ENCODE measurements at regions of chr2 and their contacts with region 1.

Region 1: GRCh38 chr2:64865073-64865830 is 123.9 kb upstream of the SLC1A4 start:
- DNase-seq: peak in 1 of 2 experiments; percentile 78
- H3K4me3 ChIP-seq: peak overlapping the region; percentile 39 to 80 (median 54)
- H3K27ac ChIP-seq: no peak overlapping the region
- H3K4me1 ChIP-seq: peaks cover 0 to 7% (median 6%) of the 10 kb centered on the region in 4 experiments
- H3K27me3 ChIP-seq: peaks cover 3 to 37% (median 32%) of the 10 kb centered on the region in 4 experiments
- CTCF ChIP-seq: peak; percentile 67 to 76 (median 68)
- EP300 ChIP-seq: no peak
- POLR2A ChIP-seq: no peak
- RAD21 ChIP-seq: peak; percentile 45 to 81; a peak in 3 of 4 replicates

Region 2: GRCh38 chr2:64644177-64645004 is 220.9 kb before region 1 on chr2:
- CTCF ChIA-PET with region 1: interaction called, 22 read pairs
- POLR2A ChIA-PET with region 1: interaction called, 9 read pairs
- DNase-seq: peak; percentile 71 to 75
- H3K4me3 ChIP-seq: peak overlapping the region; percentile 48 to 64 (median 58)
- H3K27ac ChIP-seq: peak overlapping the region; percentile 49
- H3K4me1 ChIP-seq: peaks cover 6 to 22% (median 14%) of the 10 kb centered on the region in 4 experiments
- H3K27me3 ChIP-seq: peaks cover 4 to 19% (median 11%) of the 10 kb centered on the region in 4 experiments; a peak in 6 of 7 replicates
- CTCF ChIP-seq: no peak
- EP300 ChIP-seq: no peak; a peak in 1 of 3 replicates
- POLR2A ChIP-seq: peak; percentile 51 to 57; a peak in 2 of 3 replicates
- RAD21 ChIP-seq: no peak

Region 3: GRCh38 chr2:64797881-64798575 is 67.2 kb before region 1 on chr2:
- CTCF ChIA-PET with region 1: no interaction called
- POLR2A ChIA-PET with region 1: no interaction called
- DNase-seq: no peak
- H3K4me3 ChIP-seq: no peak overlapping the region
- H3K27ac ChIP-seq: no peak overlapping the region
- H3K4me1 ChIP-seq: peaks cover 0 to 4% (median 0%) of the 10 kb centered on the region in 4 experiments; a peak in 1 of 7 replicates
- H3K27me3 ChIP-seq: no peaks in the 10 kb centered on the region; a peak in 2 of 7 replicates
- CTCF ChIP-seq: no peak
- EP300 ChIP-seq: no peak
- POLR2A ChIP-seq: no peak
- RAD21 ChIP-seq: no peak

Measured in H1 (cell line).